CD8-positive, alpha-beta T cell (primary cell): ENCODE measurements at regions of chr1 and their contacts with region 1.

Region 1: DNA sequence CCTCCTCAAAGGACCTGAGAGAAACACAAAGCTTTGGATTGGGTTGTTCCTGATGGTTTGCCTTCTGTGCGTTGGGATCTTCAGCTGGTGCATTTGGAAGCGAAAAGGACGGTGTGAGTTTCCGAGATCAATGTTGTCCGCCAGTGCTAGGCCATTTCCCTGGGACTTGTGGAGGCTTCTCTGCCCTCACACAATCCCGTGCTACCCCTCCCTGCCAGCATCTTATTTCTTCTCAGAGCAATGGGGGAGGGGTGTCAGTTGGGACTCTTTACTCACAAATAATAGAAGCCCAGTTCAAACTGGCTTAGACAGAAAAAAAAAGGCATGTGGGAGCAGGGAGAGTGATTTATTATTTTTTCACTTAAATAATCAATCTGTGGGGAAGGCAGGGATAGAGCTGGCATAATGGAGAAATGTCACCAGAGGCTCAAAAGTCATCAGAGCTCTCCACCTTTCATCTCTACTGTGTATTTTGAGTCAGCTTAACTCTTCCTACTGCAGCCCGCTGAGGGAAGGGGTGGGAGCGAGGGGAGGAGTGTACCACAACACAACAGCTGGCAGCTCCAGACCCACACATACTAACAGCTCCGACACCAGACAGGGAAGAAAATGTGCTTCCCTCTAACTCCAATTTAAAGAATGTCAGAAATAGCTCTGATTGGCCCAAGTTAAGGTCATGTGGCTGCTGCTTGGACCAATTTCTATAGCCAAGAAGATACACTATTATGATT is 22.4 kb downstream of the LY9 start:
- DNase-seq: no peak
- ATAC-seq: no peak
- H3K4me3 ChIP-seq: no peak overlapping the region
- H3K4me3 Mint-ChIP-seq: no peak overlapping the region
- H3K27ac ChIP-seq: no peak overlapping the region
- H3K27ac Mint-ChIP-seq: peak overlapping the region; percentile 62
- H3K4me1 ChIP-seq: no peaks in the 10 kb centered on the region
- H3K4me1 Mint-ChIP-seq: peaks cover 13% of the 10 kb centered on the region
- H3K27me3 ChIP-seq: no peaks in the 10 kb centered on the region
- H3K27me3 Mint-ChIP-seq: no peaks in the 10 kb centered on the region
- CTCF ChIP-seq: no peak

Region 2: DNA sequence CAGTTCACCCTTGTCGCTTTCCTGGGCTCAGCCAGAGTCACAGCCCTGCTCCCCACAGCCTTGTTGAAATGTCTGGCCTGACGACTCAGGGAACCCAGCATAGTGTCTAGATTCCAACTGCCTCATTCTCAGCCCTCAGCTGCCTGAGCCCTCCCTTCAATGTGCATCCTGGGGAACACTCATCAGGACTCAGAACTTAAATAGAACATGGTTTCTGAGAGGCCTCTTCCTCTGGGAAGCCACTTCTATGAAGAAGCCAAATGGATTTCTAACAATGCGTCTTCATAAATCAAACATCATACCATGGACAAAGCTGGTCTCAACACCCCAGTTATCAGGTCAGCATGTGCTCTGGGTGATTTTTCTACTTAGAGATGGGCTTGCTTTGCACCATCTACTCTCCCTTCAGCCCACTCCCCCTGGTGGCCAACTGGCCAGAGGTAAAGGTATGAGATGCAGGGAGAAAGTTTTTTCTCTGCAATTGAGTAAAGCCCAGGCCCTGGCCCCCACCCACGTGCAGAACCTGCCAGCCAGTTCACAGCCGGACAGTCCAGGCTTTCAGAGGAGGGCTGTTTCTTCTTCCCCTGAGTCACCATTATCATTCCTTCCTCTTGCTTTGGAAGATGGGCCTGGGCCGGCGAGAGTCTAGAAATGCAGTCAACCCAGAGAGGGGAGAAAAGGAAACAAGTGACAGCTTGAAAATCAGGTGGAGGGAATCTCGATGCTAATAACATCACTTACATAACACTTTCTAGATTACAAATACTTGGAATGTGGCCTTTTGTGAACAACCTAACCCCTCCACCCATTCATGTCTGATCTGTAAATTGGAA is 12.2 kb after region 1 on chr1:
- CTCF ChIA-PET with region 1: interaction called, 10 read pairs
- POLR2A ChIA-PET with region 1: no interaction called
- intact Hi-C with region 1: no loop called
- DNase-seq: peak; percentile 52 to 87 (median 80)
- ATAC-seq: peak; percentile 70
- H3K4me3 ChIP-seq: no peak overlapping the region
- H3K4me3 Mint-ChIP-seq: no peak overlapping the region
- H3K27ac ChIP-seq: peak overlapping the region in 1 of 2 experiments; percentile 15
- H3K27ac Mint-ChIP-seq: peak overlapping the region; percentile 86
- H3K4me1 ChIP-seq: peaks cover 25% of the 10 kb centered on the region
- H3K4me1 Mint-ChIP-seq: peaks cover 58% of the 10 kb centered on the region
- H3K27me3 ChIP-seq: no peaks in the 10 kb centered on the region
- H3K27me3 Mint-ChIP-seq: no peaks in the 10 kb centered on the region
- CTCF ChIP-seq: peak; percentile 73

Region 3: DNA sequence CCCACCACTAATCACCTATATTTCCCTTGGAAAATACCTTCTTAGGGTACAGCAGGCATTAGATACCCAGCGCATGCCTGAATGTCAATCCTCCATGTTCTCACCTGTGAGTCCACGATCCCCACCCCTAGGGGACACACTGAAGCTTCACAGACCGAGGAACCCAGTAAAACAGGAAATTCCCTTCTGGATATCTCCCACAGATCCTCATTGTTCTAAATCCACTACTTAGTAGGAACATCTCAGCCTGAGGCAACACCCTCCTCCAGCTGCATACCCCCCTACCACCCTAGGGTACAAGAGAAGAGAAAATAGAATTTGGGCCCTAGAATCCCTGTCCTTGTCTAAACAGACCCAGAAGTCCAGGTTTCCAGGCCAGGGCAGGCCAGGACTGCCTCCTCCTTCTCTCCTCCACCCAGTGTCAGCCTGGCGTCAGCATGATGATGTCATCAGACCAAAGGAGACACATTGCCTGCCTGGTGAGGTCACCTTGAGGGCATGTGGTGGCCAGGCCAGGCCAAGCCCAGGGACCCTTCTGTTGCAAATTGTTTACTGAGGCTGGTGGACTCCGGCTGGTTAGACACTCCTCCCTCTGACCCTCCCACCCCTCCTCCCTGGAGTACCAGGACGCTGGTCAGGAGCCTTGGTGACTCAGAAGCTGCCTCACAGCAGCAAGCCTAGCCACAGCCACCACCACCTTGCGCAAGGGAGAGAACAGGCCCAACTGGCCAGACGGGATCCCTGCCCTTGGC is 264.8 kb after region 1 on chr1:
- CTCF ChIA-PET with region 1: no interaction called
- POLR2A ChIA-PET with region 1: no interaction called
- intact Hi-C with region 1: no loop called
- DNase-seq: peak in 1 of 9 experiments; percentile 41
- ATAC-seq: no peak
- H3K4me3 ChIP-seq: no peak overlapping the region
- H3K4me3 Mint-ChIP-seq: no peak overlapping the region
- H3K27ac ChIP-seq: no peak overlapping the region
- H3K27ac Mint-ChIP-seq: no peak overlapping the region
- H3K4me1 ChIP-seq: no peaks in the 10 kb centered on the region
- H3K4me1 Mint-ChIP-seq: no peaks in the 10 kb centered on the region
- H3K27me3 ChIP-seq: no peaks in the 10 kb centered on the region
- H3K27me3 Mint-ChIP-seq: no peaks in the 10 kb centered on the region
- CTCF ChIP-seq: no peak